Aorta (tissue), 5 donors: ENCODE measurements at regions of chr14 and their contacts with region 1.

Region 1: DNA sequence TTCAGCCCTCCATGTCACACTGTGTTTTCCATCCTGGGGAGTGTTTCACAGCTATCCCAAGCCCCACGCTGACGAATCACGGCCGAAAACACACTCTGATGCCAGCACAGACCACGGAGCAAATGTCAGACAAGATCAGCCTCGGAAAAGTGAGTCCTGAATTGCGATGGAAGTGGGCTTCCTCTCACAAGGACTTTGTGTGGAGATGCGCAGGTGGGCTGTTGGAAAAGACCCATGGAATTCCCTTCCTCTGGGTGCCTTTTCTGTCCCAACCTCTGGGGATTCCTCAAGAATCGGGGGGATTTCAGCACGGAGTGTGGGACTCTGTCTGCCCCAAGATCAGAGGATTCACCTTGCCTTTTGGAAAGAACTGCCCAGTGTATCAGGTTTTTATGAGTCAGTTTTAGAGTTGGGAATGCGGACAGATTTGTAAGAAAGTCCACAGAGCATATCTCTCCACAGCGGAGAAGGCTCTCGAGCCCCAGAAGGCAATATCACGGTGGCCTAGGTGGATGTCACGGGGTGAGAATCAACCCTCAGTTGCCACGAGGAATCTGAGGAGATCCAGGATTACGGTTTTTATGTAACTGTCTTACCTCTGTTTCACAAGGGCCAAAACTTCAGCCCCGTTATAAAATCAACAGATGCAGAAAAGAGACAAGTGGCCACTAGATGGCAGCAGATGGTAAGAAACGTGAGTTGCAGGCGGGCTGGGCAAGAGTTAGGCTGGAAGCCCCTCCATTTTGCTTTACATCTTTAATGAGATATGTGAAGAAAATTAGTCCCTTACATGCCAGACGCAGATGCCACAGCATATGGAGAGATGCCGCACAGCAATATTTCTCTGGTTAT is 201.9 kb downstream of the DAD1 start:
- DNase-seq: peak in 1 of 2 donors; percentile 56
- ATAC-seq: peak; percentile 79
- H3K4me3 ChIP-seq: no peak overlapping the region
- H3K27ac ChIP-seq: no peak overlapping the region
- H3K4me1 ChIP-seq: no peaks in the 10 kb centered on the region
- H3K27me3 ChIP-seq: no peaks in the 10 kb centered on the region

Region 2: GRCh38 chr14:22185191-22185590 is 202.0 kb before region 1 on chr14:
- intact Hi-C with region 1: no loop called
- DNase-seq: no peak
- ATAC-seq: no peak
- H3K4me3 ChIP-seq: no peak overlapping the region
- H3K27ac ChIP-seq: no peak overlapping the region
- H3K4me1 ChIP-seq: no peaks in the 10 kb centered on the region
- H3K27me3 ChIP-seq: no peaks in the 10 kb centered on the region

Region 3: GRCh38 chr14:22438742-22439141 is 51.6 kb after region 1 on chr14:
- intact Hi-C with region 1: no loop called
- DNase-seq: no peak
- ATAC-seq: no peak
- H3K4me3 ChIP-seq: no peak overlapping the region
- H3K27ac ChIP-seq: no peak overlapping the region
- H3K4me1 ChIP-seq: no peaks in the 10 kb centered on the region
- H3K27me3 ChIP-seq: no peaks in the 10 kb centered on the region

Region 4: DNA sequence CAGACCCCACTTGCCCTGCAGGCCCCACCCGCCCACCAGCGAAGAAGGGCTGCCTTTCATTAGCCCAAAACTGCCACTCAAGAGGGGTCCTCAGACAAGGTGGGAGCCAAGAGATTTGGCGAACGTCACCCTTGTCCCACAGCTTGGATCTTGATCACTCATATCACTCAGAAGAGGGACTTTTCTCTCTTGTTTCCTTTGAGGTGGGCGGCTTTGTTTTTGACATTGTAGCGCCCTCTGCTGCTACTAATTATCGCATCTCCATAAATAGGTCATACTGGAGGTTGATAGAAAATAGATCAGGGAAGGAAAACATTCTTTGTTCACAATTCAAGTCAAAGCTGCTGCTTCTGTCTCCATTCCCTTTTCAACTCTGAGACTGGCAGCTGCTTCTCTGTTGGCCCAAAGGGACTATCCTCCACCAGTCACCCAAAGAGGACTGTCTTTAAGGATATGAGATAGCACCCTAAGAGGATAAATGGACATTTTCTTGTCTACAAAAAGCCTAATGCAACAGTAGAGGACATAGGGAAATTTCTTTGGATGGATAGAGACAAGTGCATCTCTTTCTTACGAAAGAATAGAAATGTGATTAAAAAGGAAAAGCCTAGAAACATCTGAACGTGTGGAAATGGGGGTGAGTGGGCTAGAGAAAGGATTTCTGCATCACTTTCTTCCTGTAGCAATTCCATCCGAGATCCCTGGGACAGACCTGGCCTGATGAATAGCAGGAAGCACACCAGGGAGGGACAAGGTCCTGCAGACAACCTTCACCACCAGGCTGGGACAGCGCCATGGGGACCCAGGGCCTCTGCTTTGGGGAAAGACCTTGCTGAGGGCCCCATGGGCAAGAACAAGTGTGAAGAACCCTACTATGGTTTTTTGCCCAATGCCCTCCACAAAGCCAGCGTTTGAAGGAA is 86.0 kb after region 1 on chr14:
- intact Hi-C with region 1: loop called (anchors 1 to 5 kb)
- DNase-seq: no peak
- ATAC-seq: no peak
- H3K4me3 ChIP-seq: no peak overlapping the region
- H3K27ac ChIP-seq: no peak overlapping the region
- H3K4me1 ChIP-seq: peaks cover 0 to 3% of the 10 kb centered on the region in 2 donors
- H3K27me3 ChIP-seq: peaks cover 0 to 2% of the 10 kb centered on the region in 2 donors

Region 5: DNA sequence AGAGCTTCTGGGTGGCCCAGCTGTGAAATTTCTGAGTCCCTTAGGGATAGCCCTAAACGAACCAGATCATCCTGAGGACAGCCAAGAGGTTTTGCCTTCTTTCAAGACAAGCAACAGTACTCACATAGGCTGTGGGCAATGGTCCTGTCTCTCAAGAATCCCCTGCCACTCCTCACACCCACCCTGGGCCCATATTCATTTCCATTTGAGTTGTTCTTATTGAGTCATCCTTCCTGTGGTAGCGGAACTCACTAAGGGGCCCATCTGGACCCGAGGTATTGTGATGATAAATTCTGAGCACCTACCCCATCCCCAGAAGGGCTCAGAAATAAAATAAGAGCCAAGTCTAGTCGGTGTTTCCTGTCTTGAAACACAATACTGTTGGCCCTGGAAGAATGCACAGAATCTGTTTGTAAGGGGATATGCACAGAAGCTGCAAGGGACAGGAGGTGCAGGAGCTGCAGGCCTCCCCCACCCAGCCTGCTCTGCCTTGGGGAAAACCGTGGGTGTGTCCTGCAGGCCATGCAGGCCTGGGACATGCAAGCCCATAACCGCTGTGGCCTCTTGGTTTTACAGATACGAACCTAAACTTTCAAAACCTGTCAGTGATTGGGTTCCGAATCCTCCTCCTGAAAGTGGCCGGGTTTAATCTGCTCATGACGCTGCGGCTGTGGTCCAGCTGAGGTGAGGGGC is 163.0 kb after region 1 on chr14:
- intact Hi-C with region 1: loop called (anchors 5 kb)
- DNase-seq: no peak
- ATAC-seq: no peak
- H3K4me3 ChIP-seq: no peak overlapping the region
- H3K27ac ChIP-seq: no peak overlapping the region
- H3K4me1 ChIP-seq: no peaks in the 10 kb centered on the region
- H3K27me3 ChIP-seq: no peaks in the 10 kb centered on the region

Region 6: GRCh38 chr14:22900081-22900799 is 513.1 kb after region 1 on chr14:
- intact Hi-C with region 1: loop called in 1 of 2 experiments (anchors 5 kb)
- DNase-seq: peak in 1 of 2 donors; percentile 31
- ATAC-seq: peak; percentile 75
- H3K4me3 ChIP-seq: no peak overlapping the region
- H3K27ac ChIP-seq: peak overlapping the region in 1 of 2 donors; percentile 34
- H3K4me1 ChIP-seq: no peaks in the 10 kb centered on the region
- H3K27me3 ChIP-seq: no peaks in the 10 kb centered on the region